Esophagus muscularis mucosa (tissue), 4 donors: ENCODE measurements at regions of chr17 and their contacts with region 1.

Region 1: GRCh38 chr17:28706471-28707338 is 5.0 kb downstream of the PROCA1 start:
- DNase-seq: no peak
- H3K4me3 ChIP-seq: no peak overlapping the region
- H3K27ac ChIP-seq: no peak overlapping the region
- H3K4me1 ChIP-seq: peaks cover 8 to 19% (median 16%) of the 10 kb centered on the region in 4 donors
- H3K27me3 ChIP-seq: no peaks in the 10 kb centered on the region
- CTCF ChIP-seq: no peak
- EP300 ChIP-seq: no peak
- POLR2A ChIP-seq: no peak

Region 2: GRCh38 chr17:28661635-28662537 is 44.8 kb before region 1 on chr17 and contains the starts of genes SDF2 and SUPT6H:
- intact Hi-C with region 1: loop called (anchors 5 kb)
- DNase-seq: peak; percentile 99
- H3K4me3 ChIP-seq: peak within 1 kb of the TSS; percentile 76 to 83 (median 80)
- H3K27ac ChIP-seq: peak within 1 kb of the TSS; percentile 95 to 99 (median 96)
- H3K4me1 ChIP-seq: peaks cover 26 to 65% (median 51%) of the 10 kb centered on the region in 4 donors
- H3K27me3 ChIP-seq: no peaks in the 10 kb centered on the region
- CTCF ChIP-seq: no peak
- EP300 ChIP-seq: no peak
- POLR2A ChIP-seq: peak; percentile 96
- total RNA-seq, gene SDF2: 39.1 to 46.7 (median 42.6) TPM
- total RNA-seq, gene SUPT6H: 57.3 to 84.4 (median 71.1) TPM